SK-N-SH (cell line): ENCODE measurements at regions of chr1 and their contacts with region 1.

Region 1: DNA sequence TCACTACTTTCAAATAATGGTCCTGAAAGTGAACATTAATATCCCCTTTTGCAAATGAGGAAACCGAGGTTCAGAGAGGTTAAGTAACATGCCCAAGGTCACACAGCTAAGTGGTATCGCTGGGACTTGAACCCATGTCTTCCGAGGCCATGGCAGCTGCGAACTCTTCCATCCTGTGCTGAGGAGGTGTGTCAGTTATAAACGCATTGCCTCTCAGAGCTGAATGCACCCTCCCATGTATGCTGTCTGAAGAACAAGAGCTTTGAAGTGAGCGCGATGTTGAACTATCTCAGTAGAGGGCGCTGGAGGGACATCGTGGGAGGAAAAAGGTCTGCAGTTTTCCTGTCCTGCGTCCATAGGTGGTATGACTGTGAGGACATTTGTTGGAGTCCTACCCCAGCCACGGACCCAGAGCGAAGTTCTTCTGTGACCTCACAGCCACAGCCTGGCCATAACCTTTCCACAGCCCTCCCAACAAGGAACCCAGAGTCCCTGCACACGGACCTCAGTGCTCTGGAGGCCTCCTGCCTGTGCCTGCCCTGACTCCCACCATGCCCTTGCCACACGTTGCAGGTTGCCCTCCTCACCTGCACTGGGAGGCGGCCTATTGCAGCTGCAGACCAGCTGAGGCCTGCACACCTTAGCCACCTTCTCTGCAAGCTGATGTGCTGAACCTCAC is 7.5 kb downstream of the MYOC start:
- DNase-seq: peak; percentile 67
- H3K4me3 ChIP-seq: no peak overlapping the region; a peak in 1 of 4 replicates
- H3K27ac ChIP-seq: no peak overlapping the region
- H3K4me1 ChIP-seq: peaks cover 0 to 13% of the 10 kb centered on the region in 2 experiments; a peak in 2 of 4 replicates
- H3K27me3 ChIP-seq: peaks cover 6% of the 10 kb centered on the region; the same call in 1 of the 2 replicates
- CTCF ChIP-seq: peak; percentile 75
- EP300 ChIP-seq: no peak
- RAD21 ChIP-seq: peak; percentile 87

Region 2: DNA sequence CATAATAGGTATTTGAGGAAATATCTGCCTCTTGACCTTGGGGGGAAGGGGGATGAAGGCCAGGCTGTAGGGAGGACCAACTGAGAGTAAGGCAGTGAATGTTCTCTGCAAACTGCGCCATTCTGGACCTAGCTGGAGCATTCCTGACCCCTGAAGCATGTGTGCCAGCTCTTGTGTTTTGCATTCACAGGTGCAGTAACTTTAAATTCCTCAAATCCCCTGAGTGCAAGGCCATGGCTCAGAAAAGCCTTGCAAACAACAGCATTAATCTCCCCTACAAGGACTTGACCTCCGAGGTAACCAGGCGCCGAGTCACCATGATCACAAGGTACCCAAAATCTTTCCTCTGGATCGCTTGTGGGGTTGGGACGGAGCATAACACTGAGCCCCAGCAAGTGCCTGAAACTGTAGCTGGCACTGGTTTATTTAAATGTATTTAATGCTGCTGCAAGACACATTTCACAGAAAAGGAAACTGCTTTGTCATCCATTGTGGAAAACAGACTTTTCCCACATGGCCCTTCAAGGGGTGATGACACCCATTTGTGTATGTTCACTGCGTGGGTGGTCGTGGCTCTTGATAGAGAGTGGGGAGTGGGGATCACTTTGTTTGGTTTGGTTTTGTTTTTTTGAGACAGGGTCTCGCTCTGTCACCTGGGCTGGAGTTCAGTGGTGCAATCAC is 21.2 kb before region 1 on chr1:
- CTCF ChIA-PET with region 1: interaction called, 25 read pairs
- POLR2A ChIA-PET with region 1: no interaction called
- DNase-seq: no peak
- H3K4me3 ChIP-seq: no peak overlapping the region
- H3K27ac ChIP-seq: no peak overlapping the region
- H3K4me1 ChIP-seq: no peaks in the 10 kb centered on the region
- H3K27me3 ChIP-seq: no peaks in the 10 kb centered on the region; the same call in 1 of the 2 replicates
- CTCF ChIP-seq: no peak
- EP300 ChIP-seq: no peak
- RAD21 ChIP-seq: no peak

Region 3: DNA sequence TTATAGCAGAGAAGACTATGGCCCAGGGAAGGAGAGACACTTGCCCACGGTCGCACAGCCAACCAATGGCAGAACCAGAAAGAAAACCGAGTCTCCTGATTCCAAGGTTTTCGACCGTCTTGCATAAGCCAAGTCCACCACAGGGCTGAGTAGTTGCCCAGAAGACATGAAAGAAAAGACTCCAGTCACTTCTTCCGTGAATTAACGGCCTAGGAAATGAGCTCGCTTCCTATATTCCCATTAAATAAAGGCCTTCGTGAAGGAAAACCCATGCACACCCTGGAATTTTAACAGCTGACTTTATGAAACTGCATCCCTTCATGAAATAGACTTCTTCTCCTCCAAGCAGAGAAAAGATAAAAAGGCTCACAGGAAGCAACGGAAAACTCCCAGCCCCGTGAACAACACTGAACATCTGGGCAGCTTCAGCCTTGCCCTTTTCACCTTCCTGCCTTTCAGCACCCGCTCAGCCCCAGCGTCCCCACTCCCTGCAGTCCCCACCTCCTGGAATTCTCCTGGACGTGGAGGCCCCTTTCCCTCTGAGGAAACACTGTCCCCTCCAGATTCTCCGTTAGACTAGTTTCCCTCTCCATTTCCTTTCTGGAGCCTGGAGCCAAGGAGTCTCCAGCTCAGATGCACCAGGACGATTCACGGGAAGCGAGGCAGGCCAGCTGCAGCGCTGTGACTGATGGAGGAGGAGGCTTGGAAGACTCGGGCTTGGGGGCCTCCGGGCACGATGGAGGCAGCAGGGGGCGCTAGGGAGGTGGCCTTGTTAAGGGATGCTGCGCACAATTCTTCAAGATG is 10.2 kb after region 1 on chr1:
- CTCF ChIA-PET with region 1: interaction called, 19 read pairs
- POLR2A ChIA-PET with region 1: no interaction called
- DNase-seq: peak; percentile 56
- H3K4me3 ChIP-seq: no peak overlapping the region
- H3K27ac ChIP-seq: no peak overlapping the region
- H3K4me1 ChIP-seq: peaks cover 0 to 4% of the 10 kb centered on the region in 2 experiments; a peak in 1 of 4 replicates
- H3K27me3 ChIP-seq: no peaks in the 10 kb centered on the region
- CTCF ChIP-seq: peak; percentile 59
- EP300 ChIP-seq: no peak
- RAD21 ChIP-seq: no peak; the same call in 1 of the 2 replicates

Region 4: DNA sequence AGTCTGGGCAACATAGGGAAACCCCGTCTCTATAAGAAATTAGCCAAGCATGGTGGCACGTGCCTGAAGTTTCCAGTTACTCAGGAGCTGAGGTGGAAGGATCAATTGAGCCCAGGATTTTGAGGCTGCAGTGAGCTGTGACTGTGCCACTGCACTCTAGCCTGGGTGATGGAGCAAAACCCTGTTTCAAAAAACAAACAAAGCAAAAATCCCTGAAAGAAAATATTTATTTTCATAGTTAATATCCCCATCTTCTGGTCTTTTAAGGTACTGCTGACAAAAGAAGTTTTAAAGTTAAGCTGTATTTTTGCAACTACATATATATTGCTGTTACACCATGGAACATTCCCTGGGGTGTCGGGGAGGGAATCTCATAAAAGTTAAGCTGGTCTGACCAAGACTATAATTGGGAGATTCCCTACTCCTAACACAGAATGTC is 70.9 kb after region 1 on chr1:
- CTCF ChIA-PET with region 1: interaction called, 63 read pairs
- POLR2A ChIA-PET with region 1: no interaction called
- DNase-seq: no peak
- H3K4me3 ChIP-seq: no peak overlapping the region
- H3K27ac ChIP-seq: no peak overlapping the region
- H3K4me1 ChIP-seq: no peaks in the 10 kb centered on the region
- H3K27me3 ChIP-seq: no peaks in the 10 kb centered on the region
- CTCF ChIP-seq: peak; percentile 70
- EP300 ChIP-seq: no peak
- RAD21 ChIP-seq: peak; percentile 55

Region 5: GRCh38 chr1:171741872-171742576 is 97.1 kb after region 1 on chr1 and contains the start of gene VAMP4:
- CTCF ChIA-PET with region 1: interaction called, 20 read pairs
- POLR2A ChIA-PET with region 1: no interaction called
- DNase-seq: peak; percentile 92
- H3K4me3 ChIP-seq: peak within 1 kb of the TSS; percentile 59 to 96
- H3K27ac ChIP-seq: peak within 1 kb of the TSS; percentile 95 to 100
- H3K4me1 ChIP-seq: peaks cover 19 to 22% of the 10 kb centered on the region in 2 experiments
- H3K27me3 ChIP-seq: no peaks in the 10 kb centered on the region
- CTCF ChIP-seq: no peak
- EP300 ChIP-seq: no peak; a peak in 1 of 4 replicates
- RAD21 ChIP-seq: no peak
- polyA plus RNA-seq, gene VAMP4: 2.5 and 3.3 TPM in 2 replicates

Region 6: GRCh38 chr1:171769171-171769570 is 124.2 kb after region 1 on chr1:
- CTCF ChIA-PET with region 1: interaction called, 10 read pairs
- POLR2A ChIA-PET with region 1: no interaction called
- DNase-seq: no peak
- H3K4me3 ChIP-seq: no peak overlapping the region
- H3K27ac ChIP-seq: no peak overlapping the region
- H3K4me1 ChIP-seq: no peaks in the 10 kb centered on the region
- H3K27me3 ChIP-seq: no peaks in the 10 kb centered on the region; the same call in 1 of the 2 replicates
- CTCF ChIP-seq: no peak
- EP300 ChIP-seq: no peak
- RAD21 ChIP-seq: no peak

Region 7: GRCh38 chr1:171801487-171801891 is 156.5 kb after region 1 on chr1:
- CTCF ChIA-PET with region 1: interaction called, 35 read pairs
- POLR2A ChIA-PET with region 1: no interaction called
- DNase-seq: peak; percentile 60
- H3K4me3 ChIP-seq: no peak overlapping the region
- H3K27ac ChIP-seq: no peak overlapping the region
- H3K4me1 ChIP-seq: no peaks in the 10 kb centered on the region
- H3K27me3 ChIP-seq: no peaks in the 10 kb centered on the region
- CTCF ChIP-seq: peak; percentile 86
- EP300 ChIP-seq: no peak
- RAD21 ChIP-seq: peak; percentile 84